Dorsolateral prefrontal cortex (tissue), 120 donors: ENCODE measurements at regions of chr19 and their contacts with region 1.

Region 1: GRCh38 chr19:11587302-11587974 is 9.8 kb upstream of the ZNF627 start:
- DNase-seq: peak; percentile 65 to 86 (median 76)
- H3K4me3 ChIP-seq: peak overlapping the region in 4 of 59 donors; percentile 5 to 18 (median 9)
- H3K27ac ChIP-seq: peak overlapping the region in 15 of 59 donors; percentile 9 to 68 (median 40)
- H3K27me3 ChIP-seq: no peaks in the 10 kb centered on the region
- CTCF ChIP-seq: peak; percentile 66 to 91 (median 85)

Region 2: DNA sequence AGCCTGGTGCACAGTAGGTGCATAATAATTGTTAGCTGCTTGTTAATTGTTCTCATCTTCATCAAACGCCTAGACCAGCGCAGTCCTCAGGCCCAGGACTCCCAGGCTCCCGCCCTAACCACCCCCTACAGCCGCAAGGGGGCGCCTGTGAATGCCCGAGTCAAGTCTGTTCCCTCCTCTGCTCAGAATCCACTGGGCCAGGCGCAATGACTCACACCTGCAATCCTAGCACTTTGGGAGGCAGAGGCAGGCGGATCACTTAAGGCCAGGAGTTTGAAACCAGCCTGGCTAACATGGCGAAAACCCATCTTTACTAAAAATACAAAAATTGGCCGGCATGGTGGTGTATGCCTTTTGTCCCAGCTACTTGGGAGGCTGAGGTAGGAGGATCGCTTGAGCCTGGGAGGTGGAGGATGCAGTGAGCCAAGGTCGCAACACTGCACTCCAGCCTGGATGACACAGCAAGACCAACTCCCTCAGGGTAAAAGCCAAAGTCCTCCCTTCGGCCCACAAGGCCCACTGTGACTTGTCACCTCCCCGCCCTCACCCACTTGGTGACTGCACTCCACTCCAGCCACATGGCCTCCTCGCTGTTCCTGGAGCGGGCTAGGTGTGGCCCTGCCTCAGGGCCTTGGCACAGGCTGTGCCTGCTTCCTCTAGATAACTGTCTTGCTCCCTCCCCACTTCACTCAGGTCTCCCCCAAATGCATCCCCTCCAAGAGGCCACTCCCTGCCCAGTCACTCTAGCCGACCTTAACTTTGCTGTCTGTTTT is 90.9 kb before region 1 on chr19:
- intact Hi-C with region 1: loop called in 1 of 2 experiments (anchors 5 kb)
- DNase-seq: peak in 8 of 10 donors; percentile 41 to 78 (median 64)
- H3K4me3 ChIP-seq: no peak overlapping the region
- H3K27ac ChIP-seq: peak overlapping the region in 37 of 59 donors; percentile 1 to 88 (median 51)
- H3K27me3 ChIP-seq: no peaks in the 10 kb centered on the region
- CTCF ChIP-seq: peak in 55 of 56 donors; percentile 20 to 74 (median 62)